Psoas muscle (tissue), 8 donors: ENCODE measurements at regions of chrX and their contacts with region 1.

Region 1: DNA sequence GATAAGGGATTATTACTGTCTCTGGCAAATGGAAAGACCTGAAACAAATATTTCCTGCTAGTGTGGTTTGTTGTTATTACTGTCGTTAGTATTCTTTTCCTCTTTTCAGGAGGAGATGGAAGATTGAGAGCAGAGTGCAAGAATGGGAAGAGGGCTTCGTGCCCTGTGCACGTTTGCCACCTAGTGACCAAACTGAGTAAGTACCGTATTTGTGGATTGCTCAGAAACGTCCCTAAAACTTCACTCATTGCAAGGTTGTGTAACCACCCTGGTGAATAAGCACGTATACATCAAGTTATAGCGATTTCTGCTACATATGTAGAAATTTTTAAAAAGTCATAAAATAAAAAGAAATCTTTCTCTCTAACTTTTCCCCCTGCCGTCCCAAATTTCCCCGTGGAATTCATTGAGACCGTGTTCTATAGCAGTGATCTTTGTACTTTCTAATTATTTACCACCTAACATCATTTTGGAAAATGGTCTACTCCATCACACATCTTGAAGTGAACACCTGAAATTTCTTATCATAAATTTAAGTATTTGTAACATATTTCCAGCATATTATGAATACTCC is 24.3 kb downstream of the LINC00632 start:
- DNase-seq: no peak
- ATAC-seq: peak in 2 of 4 donors; percentile 46 to 54
- H3K4me3 ChIP-seq: no peak overlapping the region
- H3K27ac ChIP-seq: no peak overlapping the region
- H3K4me1 ChIP-seq: no peaks in the 10 kb centered on the region
- H3K27me3 ChIP-seq: no peaks in the 10 kb centered on the region
- CTCF ChIP-seq: peak; percentile 73

Region 2: DNA sequence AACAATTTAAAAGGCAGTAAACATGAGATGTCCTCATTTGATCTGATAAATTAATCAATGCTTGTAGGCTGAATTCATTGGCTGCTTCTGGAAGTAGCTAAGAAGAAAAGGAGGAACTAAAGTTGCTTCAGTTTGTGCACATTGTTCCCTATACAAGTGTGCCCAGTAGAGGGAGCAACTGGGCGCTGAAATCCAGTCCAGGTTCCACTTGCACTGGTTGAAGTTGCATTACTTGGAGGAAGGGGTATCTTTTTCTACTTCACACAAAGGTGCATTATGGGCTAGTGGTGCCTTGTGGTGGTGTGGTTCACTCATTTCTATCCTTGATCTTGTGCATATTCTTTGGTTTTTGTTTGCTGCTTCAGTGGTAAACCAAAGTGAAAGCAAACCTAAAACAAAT is 161.1 kb before region 1 on chrX:
- intact Hi-C with region 1: loop called in 1 of 2 experiments (anchors 10 kb)
- DNase-seq: no peak
- ATAC-seq: no peak
- H3K4me3 ChIP-seq: no peak overlapping the region
- H3K27ac ChIP-seq: no peak overlapping the region
- H3K4me1 ChIP-seq: no peaks in the 10 kb centered on the region
- H3K27me3 ChIP-seq: peaks cover 0 to 4% (median 0%) of the 10 kb centered on the region in 3 donors
- CTCF ChIP-seq: peak; percentile 42

Region 3: DNA sequence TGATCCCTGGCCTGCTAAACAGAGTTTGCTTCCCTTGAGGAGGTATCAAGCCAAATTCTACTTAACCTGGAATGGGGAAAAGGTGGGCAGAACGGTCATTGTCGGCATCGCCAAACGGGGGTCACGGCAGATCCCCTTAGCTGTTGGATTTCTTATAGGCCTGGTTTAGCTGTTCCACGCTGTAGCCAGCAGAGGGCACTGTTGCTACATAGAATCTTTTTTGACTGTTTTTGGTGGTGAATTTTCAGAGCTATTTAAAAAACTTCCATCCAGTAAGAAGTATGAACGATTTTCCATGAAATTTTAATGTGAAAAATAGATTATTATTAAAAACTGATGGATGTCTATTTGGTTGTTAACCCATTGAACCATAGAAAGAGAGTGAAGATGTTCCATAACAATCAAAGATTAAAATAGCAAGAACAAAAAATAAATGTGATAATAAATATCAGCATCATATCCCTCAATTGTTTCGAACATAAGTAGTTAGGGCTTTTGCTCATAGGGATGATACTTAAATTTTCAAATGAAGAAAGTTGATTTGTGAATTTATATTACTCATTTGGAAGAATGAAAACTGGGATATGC is 32.3 kb after region 1 on chrX:
- intact Hi-C with region 1: no loop called
- DNase-seq: peak in 1 of 2 donors; percentile 51
- ATAC-seq: no peak
- H3K4me3 ChIP-seq: peak overlapping the region; percentile 55
- H3K27ac ChIP-seq: no peak overlapping the region
- H3K4me1 ChIP-seq: no peaks in the 10 kb centered on the region
- H3K27me3 ChIP-seq: peaks cover 0 to 23% (median 0%) of the 10 kb centered on the region in 3 donors
- CTCF ChIP-seq: peak; percentile 73